Activated naive CD4-positive, alpha-beta T cell treated with anti-CD3 and anti-CD28 coated beads for 36 hours (primary cell): ENCODE measurements at regions of chr7 and their contacts with region 1.

Region 1: DNA sequence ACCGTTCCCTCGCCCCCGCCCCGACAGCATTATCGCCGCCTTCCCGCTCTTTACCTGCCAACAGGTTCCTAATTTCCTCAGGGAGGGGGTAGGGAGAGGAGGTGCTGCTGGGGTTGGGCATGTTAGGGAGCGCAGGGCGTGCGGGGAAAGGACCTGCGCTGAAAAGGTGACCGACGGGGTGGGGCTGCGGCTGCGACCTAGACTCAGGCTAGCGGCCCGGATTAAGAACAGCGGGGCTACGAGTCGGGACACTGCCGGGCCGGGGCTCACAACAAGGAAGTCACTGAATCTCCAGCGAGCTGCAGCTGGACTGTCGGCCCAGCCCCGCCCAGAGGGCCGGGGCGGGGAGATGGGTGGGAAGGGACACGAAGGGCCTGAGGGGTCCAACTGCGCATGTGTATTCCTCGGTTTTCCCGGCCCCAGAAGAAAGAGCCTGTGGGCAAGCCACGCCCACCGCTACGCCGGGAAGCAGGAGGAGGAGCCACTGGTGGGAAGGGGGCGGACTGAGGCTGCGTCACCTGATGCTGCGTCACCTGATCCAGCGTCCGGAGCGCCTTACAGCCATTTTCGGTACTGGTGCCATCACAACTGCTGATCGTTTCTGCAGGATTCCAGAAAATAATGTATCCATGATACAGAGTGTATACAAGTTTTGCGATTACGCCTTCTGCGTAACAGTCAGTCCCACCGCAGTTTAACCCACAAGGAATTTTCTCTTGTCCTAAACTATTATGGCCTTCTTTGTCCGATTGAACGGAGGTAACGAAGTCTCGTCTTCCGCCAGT is at the start of gene SKAP2:
- DNase-seq: peak; percentile 94
- H3K4me3 Mint-ChIP-seq: peak within 1 kb of the TSS; percentile 83
- H3K27ac Mint-ChIP-seq: peak within 1 kb of the TSS; percentile 17
- H3K4me1 Mint-ChIP-seq: peaks cover 13% of the 10 kb centered on the region
- H3K27me3 Mint-ChIP-seq: peaks cover 46% of the 10 kb centered on the region
- total RNA-seq, gene SKAP2: 5.6 to 6.6 TPM

Region 2: GRCh38 chr7:25862260-25863037 is 1002.1 kb before region 1 on chr7:
- CTCF ChIA-PET with region 1: no interaction called
- intact Hi-C with region 1: loop called (anchors 2 kb)
- DNase-seq: peak; percentile 99
- H3K4me3 Mint-ChIP-seq: peak overlapping the region; percentile 58
- H3K27ac Mint-ChIP-seq: peak overlapping the region; percentile 38
- H3K4me1 Mint-ChIP-seq: peaks cover 22% of the 10 kb centered on the region
- H3K27me3 Mint-ChIP-seq: peaks cover 70% of the 10 kb centered on the region

Region 3: GRCh38 chr7:26376175-26376917 is 488.2 kb before region 1 on chr7:
- CTCF ChIA-PET with region 1: no interaction called
- intact Hi-C with region 1: loop called (anchors 5 kb)
- DNase-seq: peak; percentile 60
- H3K4me3 Mint-ChIP-seq: peak overlapping the region; percentile 78
- H3K27ac Mint-ChIP-seq: no peak overlapping the region
- H3K4me1 Mint-ChIP-seq: no peaks in the 10 kb centered on the region
- H3K27me3 Mint-ChIP-seq: peaks cover 36% of the 10 kb centered on the region

Region 4: GRCh38 chr7:27095897-27096767 is 231.6 kb after region 1 on chr7 and contains the start of gene HOXA1:
- CTCF ChIA-PET with region 1: no interaction called
- intact Hi-C with region 1: loop called (anchors 1 kb)
- DNase-seq: peak; percentile 82
- H3K4me3 Mint-ChIP-seq: peak within 1 kb of the TSS; percentile 80
- H3K27ac Mint-ChIP-seq: peak within 1 kb of the TSS; percentile 47
- H3K4me1 Mint-ChIP-seq: peaks cover 21% of the 10 kb centered on the region
- H3K27me3 Mint-ChIP-seq: peaks cover 82% of the 10 kb centered on the region
- total RNA-seq, gene HOXA1: 0.24 to 0.30 TPM

Region 5: GRCh38 chr7:27160546-27161213 is 296.2 kb after region 1 on chr7:
- CTCF ChIA-PET with region 1: interaction called, 3 read pairs
- intact Hi-C with region 1: loop called (anchors 2 kb)
- DNase-seq: peak; percentile 87
- H3K4me3 Mint-ChIP-seq: peak overlapping the region; percentile 57
- H3K27ac Mint-ChIP-seq: no peak overlapping the region
- H3K4me1 Mint-ChIP-seq: peaks cover 35% of the 10 kb centered on the region
- H3K27me3 Mint-ChIP-seq: peaks cover 77% of the 10 kb centered on the region

Region 6: DNA sequence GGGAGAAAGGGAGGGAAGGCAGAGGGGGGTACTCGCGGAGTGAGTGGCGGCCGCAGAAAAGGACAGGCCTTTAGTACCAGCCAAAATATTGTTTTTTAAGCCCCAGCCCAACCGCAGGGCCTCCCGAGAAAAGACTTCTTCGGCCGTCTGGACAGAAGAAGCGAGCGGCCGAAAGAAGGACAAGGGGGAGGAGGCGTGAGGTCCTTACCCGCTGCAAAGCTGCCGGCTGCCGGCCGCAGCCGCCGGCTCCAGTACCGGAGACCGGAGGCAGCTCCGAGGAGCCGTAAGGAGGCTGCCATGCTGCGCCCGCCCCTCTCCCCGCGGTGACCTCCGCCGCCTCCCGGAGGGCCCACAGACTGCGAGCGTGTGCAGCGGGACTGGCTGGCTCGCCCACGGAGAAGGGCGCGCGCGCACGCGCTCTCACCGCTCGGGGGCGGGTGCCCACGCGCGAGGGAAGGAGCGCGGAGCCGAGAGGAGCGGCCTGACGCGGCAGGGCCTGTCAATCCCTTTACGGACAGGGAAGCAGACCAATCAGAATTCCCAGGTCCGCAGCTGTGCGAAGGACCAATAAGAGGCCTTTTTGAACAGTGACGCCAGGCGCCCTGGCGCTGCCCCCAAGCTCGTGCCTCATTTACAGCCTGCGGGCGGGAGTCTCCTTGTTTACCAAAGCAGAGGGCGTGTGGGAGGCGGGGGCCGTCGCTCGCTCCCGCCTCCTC is 798.1 kb after region 1 on chr7 and contains the start of gene HIBADH:
- CTCF ChIA-PET with region 1: no interaction called
- intact Hi-C with region 1: loop called (anchors 1 kb)
- DNase-seq: peak; percentile 97
- H3K4me3 Mint-ChIP-seq: peak within 1 kb of the TSS; percentile 82
- H3K27ac Mint-ChIP-seq: peak within 1 kb of the TSS; percentile 69
- H3K4me1 Mint-ChIP-seq: peaks cover 14% of the 10 kb centered on the region
- H3K27me3 Mint-ChIP-seq: no peaks in the 10 kb centered on the region
- total RNA-seq, gene HIBADH: 20.8 to 22.5 TPM

Region 7: GRCh38 chr7:28520074-28521015 is 1655.8 kb after region 1 on chr7:
- CTCF ChIA-PET with region 1: no interaction called
- intact Hi-C with region 1: no loop called
- DNase-seq: no peak
- H3K4me3 Mint-ChIP-seq: no peak overlapping the region
- H3K27ac Mint-ChIP-seq: no peak overlapping the region
- H3K4me1 Mint-ChIP-seq: no peaks in the 10 kb centered on the region
- H3K27me3 Mint-ChIP-seq: peaks cover 12% of the 10 kb centered on the region